Activated CD8-positive, alpha-beta T cell treated with anti-CD3 and anti-CD28 coated beads, Interleukin-2, amount 10 ng/mL, durations not matched to agents 7 days and 5 days (primary cell): ENCODE measurements at regions of chr11 and their contacts with region 1.

Region 1: GRCh38 chr11:116927163-116927974 is 89.9 kb upstream of the APOA1 start:
- DNase-seq: peak; percentile 66
- ATAC-seq: peak; percentile 28
- H3K4me3 Mint-ChIP-seq: peak overlapping the region; percentile 48
- H3K27ac Mint-ChIP-seq: peak overlapping the region; percentile 73
- H3K4me1 Mint-ChIP-seq: peaks cover 82% of the 10 kb centered on the region
- H3K27me3 Mint-ChIP-seq: no peaks in the 10 kb centered on the region

Region 2: DNA sequence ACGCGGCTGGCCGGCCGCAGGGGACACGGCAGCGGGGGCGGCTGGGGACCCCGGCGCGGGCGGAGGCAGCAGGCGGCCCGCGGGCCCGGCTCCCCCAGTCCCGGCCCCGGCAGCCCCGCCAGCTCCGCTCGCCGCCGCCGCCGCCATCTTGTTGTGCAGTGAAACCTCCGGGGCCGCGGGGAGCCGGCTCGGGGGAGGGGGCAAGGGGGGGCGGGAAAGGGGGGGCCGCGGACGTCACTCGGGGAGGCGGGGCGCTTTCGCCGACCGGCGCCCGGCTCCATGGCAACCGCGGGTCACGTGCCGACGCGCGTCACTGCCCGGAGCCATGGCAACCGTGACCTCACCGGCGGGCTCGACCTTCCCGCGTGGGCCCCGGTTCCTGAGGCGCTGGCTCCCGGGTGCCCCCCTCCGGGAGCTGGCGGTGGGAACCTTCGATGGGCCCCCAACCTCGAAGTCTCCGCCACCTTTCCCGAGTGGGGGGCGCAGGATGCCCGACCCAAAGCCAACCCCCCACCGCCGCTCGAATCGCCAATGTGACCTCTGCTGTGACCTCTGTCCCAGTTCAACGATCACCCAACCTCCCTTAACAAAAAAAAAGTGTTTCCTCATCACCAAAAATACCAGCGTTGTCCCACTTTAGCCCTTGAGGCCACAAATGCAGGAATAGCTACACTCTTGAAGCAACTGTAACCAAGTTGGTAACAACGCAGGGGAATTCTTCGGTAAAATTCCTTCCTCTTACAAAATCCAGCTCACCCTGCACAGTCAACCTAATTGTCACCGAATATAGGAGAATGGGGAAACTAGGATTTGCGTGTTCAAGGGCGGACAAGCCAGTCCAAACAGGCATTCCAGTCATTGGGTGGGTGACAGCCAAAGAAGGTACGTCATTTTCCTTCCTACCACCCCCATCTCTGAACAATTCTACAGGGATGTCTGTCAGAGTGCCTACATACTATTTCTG is 171.2 kb after region 1 on chr11 and contains the start of gene SIK3:
- CTCF ChIA-PET with region 1: interaction called, 14 read pairs
- POLR2A ChIA-PET with region 1: interaction called, 7 read pairs
- DNase-seq: peak; percentile 93
- ATAC-seq: peak; percentile 73
- H3K4me3 Mint-ChIP-seq: peak within 1 kb of the TSS; percentile 93
- H3K27ac Mint-ChIP-seq: peak within 1 kb of the TSS; percentile 93
- H3K4me1 Mint-ChIP-seq: peaks cover 44% of the 10 kb centered on the region
- H3K27me3 Mint-ChIP-seq: no peaks in the 10 kb centered on the region
- total RNA-seq, gene SIK3: 25.9 to 31.4 TPM